Activated T-helper 2 cell treated with anti-CD3 and anti-CD28 coated beads, Interferon-gamma antibody, Interleukin-2, Interleukin-4, amounts not matched to agents 10 μg/mL and 5 μg/mL and 100 μg/mL, durations not matched to agents 14 hours and 24 hours and 36 hours (primary cell): ENCODE measurements at regions of chr2 and their contacts with region 1.

Region 1: GRCh38 chr2:9555297-9556141 is at the start of gene ADAM17:
- DNase-seq: peak; percentile 86
- H3K4me3 Mint-ChIP-seq: peak within 1 kb of the TSS; percentile 97
- H3K27ac Mint-ChIP-seq: peak within 1 kb of the TSS; percentile 97
- H3K4me1 Mint-ChIP-seq: peaks cover 40% of the 10 kb centered on the region
- H3K27me3 Mint-ChIP-seq: no peaks in the 10 kb centered on the region
- total RNA-seq, gene ADAM17: 23.3 and 25.0 TPM in 2 replicates

Region 2: GRCh38 chr2:9474361-9474967 is 81.1 kb before region 1 on chr2 and contains the start of gene IAH1:
- intact Hi-C with region 1: loop called (anchors 5 kb)
- DNase-seq: peak; percentile 61
- H3K4me3 Mint-ChIP-seq: peak within 1 kb of the TSS; percentile 74
- H3K27ac Mint-ChIP-seq: peak within 1 kb of the TSS; percentile 69
- H3K4me1 Mint-ChIP-seq: peaks cover 30% of the 10 kb centered on the region
- H3K27me3 Mint-ChIP-seq: no peaks in the 10 kb centered on the region
- total RNA-seq, gene IAH1: 82.0 and 82.4 TPM in 2 replicates

Region 3: GRCh38 chr2:9594366-9595054 is 39.0 kb after region 1 on chr2:
- intact Hi-C with region 1: loop called (anchors 1 kb)
- DNase-seq: no peak
- H3K4me3 Mint-ChIP-seq: peak overlapping the region; percentile 42
- H3K27ac Mint-ChIP-seq: peak overlapping the region; percentile 93
- H3K4me1 Mint-ChIP-seq: peaks cover 57% of the 10 kb centered on the region
- H3K27me3 Mint-ChIP-seq: no peaks in the 10 kb centered on the region

Region 4: DNA sequence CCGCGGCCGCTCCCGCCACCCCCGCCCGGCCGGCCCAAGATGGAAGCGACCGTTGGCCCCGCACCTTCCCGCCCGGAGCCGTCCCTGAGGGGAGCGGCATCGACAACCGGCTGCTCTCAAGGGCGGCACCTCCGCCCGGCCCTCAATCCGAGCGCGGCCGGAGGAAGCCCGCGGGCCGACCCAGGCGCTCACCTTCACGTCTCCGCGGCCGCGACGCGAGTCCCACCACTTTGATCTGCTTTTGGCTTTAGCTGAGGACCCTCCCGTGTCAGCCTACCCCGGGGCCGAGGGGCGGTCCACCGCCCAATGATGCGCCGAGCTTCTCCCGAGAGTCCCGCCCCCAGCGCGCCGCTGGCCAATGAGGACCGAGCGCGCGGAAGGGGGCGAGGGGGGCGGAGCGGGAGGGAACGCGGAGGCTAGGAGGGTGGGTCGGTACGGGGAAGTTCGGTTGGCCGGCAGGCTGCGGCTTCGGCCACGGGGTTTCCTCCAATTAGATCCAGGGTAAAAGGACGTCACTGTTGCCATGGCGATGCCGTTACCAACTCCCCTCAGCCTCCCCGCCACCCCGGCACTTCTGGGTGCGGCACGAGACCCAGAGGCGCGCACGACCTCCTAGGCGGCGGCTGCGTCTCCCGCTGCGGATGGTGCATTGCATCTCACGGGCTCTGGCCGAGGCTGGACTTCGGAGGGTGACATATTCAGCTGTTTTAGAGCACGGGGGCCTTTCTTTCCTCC is 75.4 kb after region 1 on chr2 and contains the start of gene YWHAQ:
- intact Hi-C with region 1: loop called (anchors 1 kb)
- DNase-seq: peak; percentile 96
- H3K4me3 Mint-ChIP-seq: peak within 1 kb of the TSS; percentile 99
- H3K27ac Mint-ChIP-seq: peak within 1 kb of the TSS; percentile 96
- H3K4me1 Mint-ChIP-seq: peaks cover 40% of the 10 kb centered on the region
- H3K27me3 Mint-ChIP-seq: no peaks in the 10 kb centered on the region
- total RNA-seq, gene YWHAQ: 334 and 339 TPM in 2 replicates

Region 5: GRCh38 chr2:9708683-9709538 is 153.4 kb after region 1 on chr2:
- intact Hi-C with region 1: loop called (anchors 2 kb)
- DNase-seq: peak; percentile 26
- H3K4me3 Mint-ChIP-seq: peak overlapping the region; percentile 17
- H3K27ac Mint-ChIP-seq: peak overlapping the region; percentile 98
- H3K4me1 Mint-ChIP-seq: peaks cover 57% of the 10 kb centered on the region
- H3K27me3 Mint-ChIP-seq: no peaks in the 10 kb centered on the region

Region 6: DNA sequence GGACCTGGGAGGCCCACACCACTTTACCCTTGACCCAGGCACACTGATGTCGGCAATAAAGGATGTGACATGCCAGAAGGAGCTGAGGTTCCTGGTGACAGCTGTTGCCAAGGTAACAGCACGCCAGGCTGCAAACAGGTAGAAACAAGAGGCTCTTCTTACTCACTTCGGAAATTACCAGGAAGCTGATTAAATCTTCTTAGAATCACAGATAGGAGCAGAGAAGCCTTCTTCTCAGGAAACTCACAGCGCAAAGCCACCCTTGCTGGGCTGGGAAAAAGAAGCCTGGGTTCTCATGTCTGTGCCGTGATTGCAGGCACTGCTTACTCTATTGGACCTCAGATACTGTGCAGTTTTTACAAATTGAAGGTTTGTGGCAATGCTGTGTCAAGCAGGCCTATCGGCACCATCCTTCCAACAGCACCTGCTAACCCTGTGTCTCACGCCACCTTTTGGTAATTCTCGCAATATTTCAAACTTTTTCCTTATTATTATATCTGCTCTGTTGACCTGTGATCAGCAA is 226.7 kb after region 1 on chr2:
- intact Hi-C with region 1: loop called (anchors 1 kb)
- DNase-seq: peak; percentile 82
- H3K4me3 Mint-ChIP-seq: peak overlapping the region; percentile 66
- H3K27ac Mint-ChIP-seq: peak overlapping the region; percentile 99
- H3K4me1 Mint-ChIP-seq: peaks cover 67% of the 10 kb centered on the region
- H3K27me3 Mint-ChIP-seq: no peaks in the 10 kb centered on the region